Activated CD4-positive, alpha-beta T cell treated with anti-CD3 and anti-CD28 coated beads for 36 hours (primary cell): ENCODE measurements at regions of chr6 and their contacts with region 1.

Region 1: DNA sequence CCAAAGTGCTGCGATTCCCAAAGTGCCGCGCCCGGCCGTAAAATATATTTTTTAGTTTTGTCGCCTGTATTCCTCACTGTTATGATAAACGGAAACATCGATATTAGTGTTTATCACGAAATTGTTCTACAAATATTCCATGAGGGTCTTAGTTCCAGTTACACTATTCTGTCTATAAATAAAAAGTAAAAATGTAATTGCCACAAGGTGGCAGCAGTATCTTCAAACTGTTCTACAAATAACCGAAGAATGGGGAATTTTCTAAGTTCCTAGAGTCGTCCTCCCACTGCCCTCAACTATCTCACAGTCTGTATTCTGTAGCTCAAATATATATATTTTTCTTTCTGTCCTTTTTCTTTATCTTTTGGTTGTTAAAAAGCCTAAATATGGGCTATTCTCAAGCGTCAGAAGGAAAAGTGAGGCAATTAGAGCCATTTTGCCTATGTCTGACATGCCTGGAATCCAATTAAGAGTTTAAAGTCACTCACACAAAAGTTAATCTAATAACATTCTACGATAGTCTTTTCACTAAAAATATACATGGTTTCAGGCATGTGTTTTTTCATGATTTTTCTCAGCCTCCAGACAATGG is 14.2 kb upstream of the FAM162B start:
- DNase-seq: no peak
- ATAC-seq: no peak
- H3K4me3 Mint-ChIP-seq: no peak overlapping the region
- H3K27ac Mint-ChIP-seq: no peak overlapping the region
- H3K4me1 Mint-ChIP-seq: no peaks in the 10 kb centered on the region
- H3K27me3 Mint-ChIP-seq: peaks cover 5% of the 10 kb centered on the region

Region 2: GRCh38 chr6:116714761-116715160 is 64.9 kb before region 1 on chr6:
- CTCF ChIA-PET with region 1: no interaction called
- POLR2A ChIA-PET with region 1: no interaction called
- intact Hi-C with region 1: no loop called
- DNase-seq: no peak
- ATAC-seq: no peak
- H3K4me3 Mint-ChIP-seq: no peak overlapping the region
- H3K27ac Mint-ChIP-seq: no peak overlapping the region
- H3K4me1 Mint-ChIP-seq: peaks cover 17% of the 10 kb centered on the region
- H3K27me3 Mint-ChIP-seq: no peaks in the 10 kb centered on the region

Region 3: GRCh38 chr6:116847227-116847626 is 67.6 kb after region 1 on chr6:
- CTCF ChIA-PET with region 1: interaction called, 10 read pairs
- POLR2A ChIA-PET with region 1: no interaction called
- intact Hi-C with region 1: no loop called
- DNase-seq: no peak
- ATAC-seq: no peak
- H3K4me3 Mint-ChIP-seq: no peak overlapping the region
- H3K27ac Mint-ChIP-seq: no peak overlapping the region
- H3K4me1 Mint-ChIP-seq: no peaks in the 10 kb centered on the region
- H3K27me3 Mint-ChIP-seq: peaks cover 7% of the 10 kb centered on the region

Region 4: DNA sequence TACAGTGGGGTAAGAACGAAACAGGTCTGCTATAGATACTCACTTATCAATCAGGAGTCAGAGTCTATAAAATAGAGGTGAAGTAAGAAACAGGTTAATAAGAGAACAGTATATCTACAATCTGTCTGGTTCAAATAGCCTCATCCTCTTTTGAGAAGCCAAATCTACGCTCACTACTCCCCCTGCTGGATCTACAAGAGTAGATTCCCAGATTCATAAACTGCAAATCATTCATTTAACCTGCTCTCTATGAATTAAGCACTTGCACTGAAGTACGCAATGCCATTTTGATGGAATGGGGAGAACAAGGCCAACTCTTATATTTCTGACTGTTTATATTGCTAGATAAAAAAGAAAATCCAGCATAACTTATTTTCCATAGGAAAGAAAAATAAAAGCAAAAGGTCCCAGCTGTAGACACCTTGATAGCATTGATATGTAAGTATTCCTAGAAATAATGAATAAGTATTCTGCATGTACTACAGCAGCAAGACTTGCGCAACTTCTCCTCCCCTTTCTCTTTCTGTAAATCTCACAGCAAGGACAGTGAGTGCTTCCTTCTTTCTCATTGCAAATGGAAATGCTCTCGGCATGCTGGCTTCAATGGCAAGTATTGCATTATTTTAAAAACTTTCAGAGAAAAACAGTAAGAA is 189.7 kb after region 1 on chr6:
- CTCF ChIA-PET with region 1: no interaction called
- POLR2A ChIA-PET with region 1: no interaction called
- intact Hi-C with region 1: loop called (anchors 1 to 10 kb)
- DNase-seq: peak; percentile 21
- ATAC-seq: no peak
- H3K4me3 Mint-ChIP-seq: no peak overlapping the region
- H3K27ac Mint-ChIP-seq: no peak overlapping the region
- H3K4me1 Mint-ChIP-seq: no peaks in the 10 kb centered on the region
- H3K27me3 Mint-ChIP-seq: peaks cover 2% of the 10 kb centered on the region

Region 5: DNA sequence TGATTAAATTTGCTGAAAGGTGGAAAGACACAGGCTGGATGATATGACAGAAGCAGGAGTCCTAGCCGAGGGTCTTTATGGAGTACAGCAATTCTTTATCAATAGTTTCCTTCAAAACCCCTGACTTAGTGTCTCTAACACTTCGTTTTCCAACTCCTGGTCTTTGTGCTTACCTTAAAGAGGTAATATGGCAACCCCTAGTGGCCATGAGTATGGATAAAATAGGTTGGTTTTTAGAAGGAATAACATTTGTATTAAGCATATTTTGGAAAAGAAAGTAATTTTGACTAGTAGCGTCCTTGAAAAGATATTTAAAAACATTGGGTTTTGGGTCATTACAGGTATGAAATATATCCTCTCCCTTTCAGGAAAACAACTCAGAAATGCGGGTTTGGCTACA is 537.6 kb after region 1 on chr6:
- CTCF ChIA-PET with region 1: no interaction called
- POLR2A ChIA-PET with region 1: no interaction called
- intact Hi-C with region 1: loop called in 1 of 2 experiments (anchors 5 kb)
- DNase-seq: no peak
- ATAC-seq: no peak
- H3K4me3 Mint-ChIP-seq: no peak overlapping the region
- H3K27ac Mint-ChIP-seq: no peak overlapping the region
- H3K4me1 Mint-ChIP-seq: no peaks in the 10 kb centered on the region
- H3K27me3 Mint-ChIP-seq: peaks cover 13% of the 10 kb centered on the region